Mammary epithelial cell (primary cell): ENCODE measurements at regions of chr14 and their contacts with region 1.

Region 1: GRCh38 chr14:91817566-91818325 is 49.6 kb downstream of the TC2N start:
- DNase-seq: no peak
- H3K4me3 ChIP-seq: no peak overlapping the region
- H3K27ac ChIP-seq: no peak overlapping the region
- H3K4me1 ChIP-seq: no peaks in the 10 kb centered on the region
- H3K27me3 ChIP-seq: no peaks in the 10 kb centered on the region
- CTCF ChIP-seq: no peak

Region 2: GRCh38 chr14:91732452-91733167 is 85.1 kb before region 1 on chr14:
- CTCF ChIA-PET with region 1: no interaction called
- dilution Hi-C with region 1: loop called (anchors 5 kb)
- in situ Hi-C with region 1: no loop called
- intact Hi-C with region 1: no loop called
- DNase-seq: no peak
- H3K4me3 ChIP-seq: no peak overlapping the region
- H3K27ac ChIP-seq: no peak overlapping the region
- H3K4me1 ChIP-seq: no peaks in the 10 kb centered on the region
- H3K27me3 ChIP-seq: no peaks in the 10 kb centered on the region
- CTCF ChIP-seq: no peak

Region 3: DNA sequence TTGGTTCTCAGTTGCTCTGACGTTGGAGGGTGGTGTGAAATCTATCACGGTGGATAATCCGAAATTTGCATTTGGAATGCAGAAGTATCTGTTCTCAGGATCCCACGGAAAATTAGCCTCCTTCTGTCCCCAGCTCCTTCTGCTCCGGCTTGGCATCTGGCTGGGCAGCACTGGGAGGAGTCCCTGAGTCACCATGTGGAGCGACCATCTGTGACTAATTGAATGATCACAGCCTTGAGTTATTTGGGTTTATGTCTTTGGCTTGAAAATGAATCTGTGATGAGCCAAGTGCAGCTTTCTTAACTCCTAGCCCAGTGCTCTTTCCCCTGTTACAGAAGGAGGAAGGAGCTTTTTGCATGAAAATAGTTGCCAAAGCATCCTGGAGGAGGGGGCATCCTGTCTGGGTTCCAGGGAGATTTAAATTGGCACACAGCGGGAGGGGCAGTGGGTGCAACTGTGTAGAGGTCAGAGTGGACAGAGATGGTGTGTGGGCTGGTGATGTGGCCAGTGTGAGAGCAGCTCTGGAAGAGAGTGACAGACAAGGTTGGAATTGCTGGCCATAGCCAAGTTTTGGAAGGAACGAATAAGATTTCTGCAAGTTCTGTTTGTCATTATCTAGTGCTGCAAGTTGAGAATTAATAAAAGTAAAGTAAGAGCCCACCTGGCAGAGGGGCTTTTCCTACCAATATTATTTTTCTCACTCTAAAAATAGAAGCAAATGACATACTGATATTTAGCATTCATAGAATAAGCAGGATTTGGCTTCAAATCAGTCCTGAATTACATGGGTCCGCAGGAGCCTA is 579.6 kb after region 1 on chr14:
- CTCF ChIA-PET with region 1: no interaction called
- dilution Hi-C with region 1: no loop called
- in situ Hi-C with region 1: no loop called
- intact Hi-C with region 1: no loop called
- DNase-seq: peak; percentile 72
- H3K4me3 ChIP-seq: no peak overlapping the region
- H3K27ac ChIP-seq: no peak overlapping the region
- H3K4me1 ChIP-seq: peaks cover 17% of the 10 kb centered on the region
- H3K27me3 ChIP-seq: no peaks in the 10 kb centered on the region
- CTCF ChIP-seq: no peak